ENCODE measurements at regions of chr7 and their contacts with region 1.

Region 1: GRCh38 chr7:138752568-138753518 is 45.0 kb upstream of the TMEM213 start:
- DNase-seq: peak; percentile 96
- H3K4me3 Mint-ChIP-seq: peak overlapping the region; percentile 51
- H3K27ac Mint-ChIP-seq: peak overlapping the region; percentile 63
- H3K4me1 Mint-ChIP-seq: peaks cover 54% of the 10 kb centered on the region
- H3K27me3 Mint-ChIP-seq: peaks cover 7% of the 10 kb centered on the region

Region 2: DNA sequence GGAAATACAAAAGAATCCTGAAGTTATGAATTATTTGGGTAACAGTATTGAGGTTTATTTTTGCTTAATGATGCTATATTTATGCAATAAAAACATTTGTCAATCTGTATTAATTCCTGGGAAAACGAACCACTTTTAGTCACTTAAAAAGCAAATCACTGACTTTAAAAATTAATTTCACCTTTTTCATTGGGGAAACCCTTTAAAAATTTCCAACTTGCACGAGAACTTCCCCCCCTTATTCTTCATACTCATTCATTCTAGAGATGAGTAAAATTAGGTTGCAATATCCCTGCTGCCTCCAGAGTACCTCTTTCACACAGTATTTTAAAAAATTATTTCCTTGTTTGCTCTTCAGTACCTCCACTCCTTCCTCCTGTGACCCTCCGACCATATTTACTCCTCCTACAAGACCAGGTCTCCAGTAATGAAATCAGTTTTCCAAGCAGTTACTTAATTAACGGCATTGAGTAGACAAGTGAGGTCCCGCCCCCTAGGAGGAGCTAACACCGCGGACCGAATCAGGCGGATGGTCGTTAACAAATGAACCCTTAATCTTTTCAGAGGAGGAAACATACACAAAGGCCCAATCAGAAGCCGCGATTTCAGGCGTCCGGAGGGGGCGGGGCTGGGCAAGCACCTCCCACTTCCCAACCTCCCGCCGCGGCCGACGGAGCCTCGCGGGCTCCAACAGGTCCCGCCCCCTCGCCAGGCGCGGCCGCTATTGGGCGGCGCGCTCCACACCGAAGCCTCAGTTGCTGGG is 293.2 kb before region 1 on chr7:
- intact Hi-C with region 1: loop called (anchors 1 kb)
- DNase-seq: peak; percentile 99
- H3K4me3 Mint-ChIP-seq: peak overlapping the region; percentile 78
- H3K27ac Mint-ChIP-seq: peak overlapping the region; percentile 47
- H3K4me1 Mint-ChIP-seq: peaks cover 17% of the 10 kb centered on the region
- H3K27me3 Mint-ChIP-seq: peaks cover 2% of the 10 kb centered on the region

Region 3: DNA sequence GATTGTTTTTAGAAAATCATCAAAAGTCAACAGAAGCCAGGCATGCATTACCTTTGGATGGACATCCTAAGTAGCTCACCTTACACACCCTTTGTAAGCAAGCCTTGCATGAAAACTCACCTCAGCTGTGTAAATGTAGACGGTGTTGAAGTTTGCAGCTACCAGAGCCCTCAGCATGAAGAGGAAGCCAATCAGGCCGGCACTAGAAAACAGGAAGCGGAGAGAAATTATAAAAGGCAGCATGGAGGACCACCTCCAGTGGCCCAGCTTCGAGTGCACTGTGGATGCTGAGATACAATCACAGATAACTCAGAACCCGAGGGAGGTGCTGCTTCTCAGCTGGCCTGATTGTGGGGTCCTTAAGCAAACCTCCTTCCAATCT is 127.0 kb before region 1 on chr7:
- intact Hi-C with region 1: loop called (anchors 5 kb)
- DNase-seq: peak; percentile 70
- H3K4me3 Mint-ChIP-seq: peak overlapping the region; percentile 42
- H3K27ac Mint-ChIP-seq: peak overlapping the region; percentile 27
- H3K4me1 Mint-ChIP-seq: peaks cover 31% of the 10 kb centered on the region
- H3K27me3 Mint-ChIP-seq: peaks cover 2% of the 10 kb centered on the region

Region 4: DNA sequence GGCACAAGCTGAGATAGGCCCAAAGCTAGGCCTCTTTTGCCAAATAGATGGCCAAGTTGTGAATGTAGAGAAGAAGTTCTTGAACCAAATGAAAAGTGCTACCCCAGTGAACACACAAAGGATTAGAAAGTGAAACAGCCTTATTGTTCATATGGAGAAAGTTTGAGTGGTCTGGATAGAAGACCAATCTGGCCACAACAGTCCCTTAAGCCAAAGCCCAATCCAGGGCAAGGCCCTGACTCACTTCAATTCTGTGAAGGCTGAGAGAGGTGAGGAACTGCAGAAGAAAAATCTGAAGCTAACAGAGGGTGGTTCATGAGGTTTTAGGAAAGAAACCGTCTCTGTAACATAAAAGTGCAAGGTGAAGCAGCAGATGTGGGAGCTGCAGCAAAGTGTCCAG is 63.8 kb after region 1 on chr7:
- intact Hi-C with region 1: loop called (anchors 2 kb)
- DNase-seq: no peak
- H3K4me3 Mint-ChIP-seq: no peak overlapping the region
- H3K27ac Mint-ChIP-seq: no peak overlapping the region
- H3K4me1 Mint-ChIP-seq: peaks cover 24% of the 10 kb centered on the region
- H3K27me3 Mint-ChIP-seq: no peaks in the 10 kb centered on the region

Region 5: DNA sequence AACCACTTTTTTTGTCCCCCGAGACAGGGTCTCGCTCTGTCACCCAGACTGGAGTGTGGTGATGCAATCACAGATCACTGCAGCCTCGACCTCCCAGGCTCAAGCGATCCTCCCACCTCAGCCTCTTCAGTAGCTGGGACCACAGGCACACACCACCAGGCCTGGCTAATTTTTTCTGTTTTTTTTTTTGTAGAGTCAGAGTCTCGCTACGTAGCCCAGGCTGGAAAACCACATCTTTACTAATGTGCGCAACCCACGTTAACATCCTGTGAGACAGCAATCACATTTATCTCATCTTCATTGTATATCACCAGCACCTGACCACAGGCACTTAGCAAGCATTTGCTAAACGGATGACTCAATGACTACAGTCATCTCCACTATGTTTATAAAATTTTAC is 123.0 kb after region 1 on chr7:
- intact Hi-C with region 1: loop called (anchors 5 kb)
- DNase-seq: peak; percentile 92
- H3K4me3 Mint-ChIP-seq: no peak overlapping the region
- H3K27ac Mint-ChIP-seq: peak overlapping the region; percentile 46
- H3K4me1 Mint-ChIP-seq: peaks cover 18% of the 10 kb centered on the region
- H3K27me3 Mint-ChIP-seq: peaks cover 10% of the 10 kb centered on the region

Measured in activated CD4-positive, alpha-beta T cell treated with anti-CD3 and anti-CD28 coated beads, Interleukin-2, amount 10 ng/mL, durations not matched to agents 24 days and 14 days (primary cell).